Posterior cingulate gyrus (tissue), 11 donors: ENCODE measurements at regions of chr2 and their contacts with region 1.

Region 1: GRCh38 chr2:196076778-196077568 is 8.3 kb upstream of the DNAH7 start:
- DNase-seq: no peak

Region 2: GRCh38 chr2:196277002-196277401 is 200.0 kb after region 1 on chr2:
- intact Hi-C with region 1: loop called (anchors 5 kb)
- DNase-seq: no peak